Tibial artery (tissue), 4 donors: ENCODE measurements at regions of chr1 and their contacts with region 1.

Region 1: DNA sequence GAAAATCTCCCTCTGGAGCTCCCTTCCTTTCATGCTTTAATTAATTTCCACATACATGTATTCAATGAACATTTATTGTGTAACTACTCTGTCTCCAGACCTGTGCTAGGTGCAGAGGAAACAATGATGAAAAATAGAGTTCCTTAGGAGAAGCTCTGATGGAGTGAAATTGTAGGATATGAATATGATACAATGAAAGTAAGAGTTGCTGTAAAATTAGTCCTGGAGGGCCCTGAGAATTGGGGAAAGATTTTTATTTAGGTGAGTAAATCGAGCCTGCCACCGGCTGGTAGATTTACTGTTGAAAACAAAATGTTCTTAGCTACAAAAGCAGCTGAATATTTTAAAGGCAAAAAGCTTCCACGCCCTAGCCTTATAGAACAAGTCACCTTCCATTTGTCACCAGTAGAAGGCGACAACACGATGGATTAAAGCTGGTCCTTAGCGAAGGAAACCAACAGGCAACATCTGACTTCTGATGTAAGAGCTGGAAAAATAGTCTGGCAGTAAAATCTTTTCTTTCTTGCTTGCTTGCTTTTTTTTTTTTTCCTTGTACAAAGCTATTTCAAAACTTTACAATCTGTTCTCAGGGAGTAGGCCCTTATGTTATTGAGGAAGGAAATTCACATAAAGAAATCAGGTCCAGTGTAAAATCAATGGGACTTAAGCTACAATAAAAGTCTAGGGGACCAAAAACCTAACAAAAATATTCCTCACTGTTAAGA is 82.0 kb upstream of the ROR1 start:
- DNase-seq: peak; percentile 69 to 75
- H3K4me3 ChIP-seq: no peak overlapping the region
- H3K27ac ChIP-seq: peak overlapping the region; percentile 88 to 90
- H3K4me1 ChIP-seq: peaks cover 0 to 46% (median 11%) of the 10 kb centered on the region in 4 donors
- H3K27me3 ChIP-seq: no peaks in the 10 kb centered on the region
- CTCF ChIP-seq: peak; percentile 74 to 93

Region 2: GRCh38 chr1:63651161-63651701 is 40.6 kb before region 1 on chr1:
- intact Hi-C with region 1: no loop called
- DNase-seq: no peak
- H3K4me3 ChIP-seq: no peak overlapping the region
- H3K27ac ChIP-seq: no peak overlapping the region
- H3K4me1 ChIP-seq: peaks cover 0 to under 1% (median 0%) of the 10 kb centered on the region in 4 donors
- H3K27me3 ChIP-seq: no peaks in the 10 kb centered on the region
- CTCF ChIP-seq: no peak

Region 3: GRCh38 chr1:63773815-63774616 is 82.2 kb after region 1 on chr1 and contains the start of gene ROR1:
- intact Hi-C with region 1: loop called (anchors 5 kb)
- DNase-seq: peak; percentile 92 to 96
- H3K4me3 ChIP-seq: peak within 1 kb of the TSS; percentile 92 to 94
- H3K27ac ChIP-seq: peak within 1 kb of the TSS; percentile 99
- H3K4me1 ChIP-seq: peaks cover 0 to 45% (median 21%) of the 10 kb centered on the region in 4 donors
- H3K27me3 ChIP-seq: no peaks in the 10 kb centered on the region
- CTCF ChIP-seq: peak; percentile 75 to 77

Region 4: DNA sequence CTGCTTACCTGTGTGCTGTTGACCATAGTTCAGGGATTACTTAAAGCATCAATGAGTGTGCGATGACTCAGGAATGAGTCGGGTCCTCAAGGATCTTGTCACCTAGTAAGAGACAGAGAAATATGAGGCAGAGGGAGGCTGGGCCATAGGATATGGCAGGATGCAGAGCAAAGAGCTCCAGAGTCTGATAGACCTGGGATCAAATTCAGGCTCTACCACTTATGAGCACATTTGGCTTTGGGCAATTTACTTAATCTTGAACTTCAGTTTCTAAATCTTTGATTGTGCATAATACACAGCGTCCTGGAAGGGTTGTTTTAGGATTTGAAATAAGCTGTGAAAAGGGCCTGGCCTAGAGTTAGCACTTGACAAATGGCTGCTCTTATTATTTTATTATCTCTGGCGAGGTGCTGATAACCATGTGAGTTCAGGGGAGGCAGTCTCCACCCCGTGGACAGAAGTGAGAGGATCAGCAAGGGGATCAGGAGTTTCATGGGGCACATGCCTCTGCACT is 176.5 kb after region 1 on chr1:
- intact Hi-C with region 1: no loop called
- DNase-seq: peak in 1 of 2 donors; percentile 32
- H3K4me3 ChIP-seq: no peak overlapping the region
- H3K27ac ChIP-seq: no peak overlapping the region
- H3K4me1 ChIP-seq: peaks cover 0 to 53% (median 16%) of the 10 kb centered on the region in 4 donors
- H3K27me3 ChIP-seq: no peaks in the 10 kb centered on the region
- CTCF ChIP-seq: no peak

Region 5: GRCh38 chr1:63917571-63918417 is 225.9 kb after region 1 on chr1:
- intact Hi-C with region 1: loop called (anchors 10 kb)
- DNase-seq: no peak
- H3K4me3 ChIP-seq: peak overlapping the region; percentile 8 to 27
- H3K27ac ChIP-seq: peak overlapping the region; percentile 66 to 76
- H3K4me1 ChIP-seq: peaks cover 0 to 92% (median 34%) of the 10 kb centered on the region in 4 donors
- H3K27me3 ChIP-seq: no peaks in the 10 kb centered on the region
- CTCF ChIP-seq: peak; percentile 14 to 28

Region 6: DNA sequence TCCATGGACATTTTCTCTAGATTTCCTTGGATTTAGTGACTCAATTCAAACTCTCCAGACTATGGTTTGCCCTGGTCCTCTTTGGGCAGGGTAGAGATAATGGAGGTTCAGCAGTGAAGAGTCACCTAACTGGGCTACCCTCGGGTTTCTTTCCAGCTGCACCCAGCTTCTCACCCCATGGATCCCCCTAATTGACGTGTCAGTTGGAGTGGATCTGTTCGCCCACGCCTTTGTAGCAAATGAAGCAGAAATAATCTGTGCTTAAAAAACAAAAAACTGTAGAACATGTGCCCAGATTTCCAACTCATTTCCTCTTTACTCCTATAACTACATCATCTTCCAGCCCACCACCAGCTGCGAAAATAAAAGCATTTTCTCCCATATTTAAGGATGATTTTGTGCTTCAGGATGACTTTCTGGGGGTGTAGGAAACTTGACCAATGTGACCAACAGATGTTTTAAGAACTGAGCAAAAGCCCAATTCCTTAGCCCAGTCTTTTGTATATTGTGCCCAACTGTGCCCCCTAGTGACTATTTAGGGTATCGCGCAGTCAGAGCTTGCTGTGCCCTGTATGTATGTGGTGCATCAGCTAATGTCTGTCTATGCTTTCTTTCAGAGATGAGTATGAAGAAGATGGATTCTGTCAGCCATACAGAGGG is 445.0 kb after region 1 on chr1:
- intact Hi-C with region 1: loop called (anchors 5 kb)
- DNase-seq: peak; percentile 85 to 92
- H3K4me3 ChIP-seq: no peak overlapping the region
- H3K27ac ChIP-seq: peak overlapping the region; percentile 5 to 32
- H3K4me1 ChIP-seq: peaks cover 0 to 44% (median 9%) of the 10 kb centered on the region in 4 donors
- H3K27me3 ChIP-seq: no peaks in the 10 kb centered on the region
- CTCF ChIP-seq: peak; percentile 90 to 92

Region 7: GRCh38 chr1:64163970-64164369 is 472.1 kb after region 1 on chr1:
- intact Hi-C with region 1: loop called (anchors 10 kb)
- DNase-seq: no peak
- H3K4me3 ChIP-seq: no peak overlapping the region
- H3K27ac ChIP-seq: peak overlapping the region; percentile 65 to 68
- H3K4me1 ChIP-seq: peaks cover 0 to 48% (median 21%) of the 10 kb centered on the region in 4 donors
- H3K27me3 ChIP-seq: no peaks in the 10 kb centered on the region
- CTCF ChIP-seq: peak; percentile 42 to 50